GM13976 (cell line): ENCODE measurements at regions of chr14 and their contacts with region 1.

Region 1: GRCh38 chr14:93655078-93655750 is 133.1 kb downstream of the PRIMA1 start:
- DNase-seq: peak; percentile 39
- CTCF ChIP-seq: peak; percentile 27

Region 2: GRCh38 chr14:93249128-93249821 is 405.9 kb before region 1 on chr14:
- in situ Hi-C with region 1: no loop called
- DNase-seq: no peak
- CTCF ChIP-seq: no peak

Region 3: GRCh38 chr14:93464271-93464670 is 190.9 kb before region 1 on chr14:
- in situ Hi-C with region 1: no loop called
- DNase-seq: no peak
- CTCF ChIP-seq: no peak

Region 4: DNA sequence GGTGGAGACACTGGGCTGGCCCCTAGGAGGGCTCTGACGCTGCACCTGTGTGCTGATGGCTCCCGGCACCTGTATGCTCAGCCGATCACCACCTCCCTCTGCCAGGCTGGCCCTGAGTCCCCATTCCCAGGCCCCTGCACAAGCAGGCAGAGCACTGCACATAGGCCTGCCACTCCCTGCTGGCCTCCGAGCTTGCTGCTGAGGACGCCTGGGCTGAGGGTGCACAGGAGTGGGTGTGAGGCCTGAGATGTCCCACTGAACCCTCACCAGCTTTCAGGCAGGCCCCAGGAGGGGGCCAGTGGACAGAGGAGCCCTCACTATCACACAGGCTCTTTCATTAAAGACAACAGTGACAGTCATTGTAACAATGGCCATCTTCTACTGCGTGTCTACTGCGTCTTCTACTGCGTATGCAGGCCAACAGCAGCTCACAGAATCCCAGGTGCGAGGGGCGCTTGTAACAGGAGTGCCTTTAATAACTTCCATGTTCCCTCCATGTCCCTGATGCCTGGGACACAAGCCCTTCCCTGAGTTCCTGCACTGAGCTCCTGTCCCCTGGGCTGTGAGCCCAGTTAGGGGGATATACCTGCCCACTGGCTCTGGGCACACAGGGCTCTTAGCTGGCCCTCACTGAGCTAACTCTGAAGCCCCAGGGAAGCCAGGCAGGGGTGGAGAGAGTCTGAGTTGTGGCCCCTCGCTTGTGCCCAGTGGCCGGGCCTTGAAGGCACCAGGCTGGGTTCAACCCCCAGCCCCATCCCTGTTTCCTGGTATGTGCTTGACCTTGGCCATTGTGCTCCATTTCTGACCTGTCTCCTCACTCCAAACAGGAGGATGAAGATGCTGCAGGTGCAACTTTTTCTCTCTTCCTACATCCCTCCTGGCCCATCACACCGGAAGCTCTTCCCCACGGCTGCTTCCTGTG is 61.8 kb after region 1 on chr14:
- in situ Hi-C with region 1: no loop called
- DNase-seq: peak; percentile 24
- CTCF ChIP-seq: no peak

Region 5: DNA sequence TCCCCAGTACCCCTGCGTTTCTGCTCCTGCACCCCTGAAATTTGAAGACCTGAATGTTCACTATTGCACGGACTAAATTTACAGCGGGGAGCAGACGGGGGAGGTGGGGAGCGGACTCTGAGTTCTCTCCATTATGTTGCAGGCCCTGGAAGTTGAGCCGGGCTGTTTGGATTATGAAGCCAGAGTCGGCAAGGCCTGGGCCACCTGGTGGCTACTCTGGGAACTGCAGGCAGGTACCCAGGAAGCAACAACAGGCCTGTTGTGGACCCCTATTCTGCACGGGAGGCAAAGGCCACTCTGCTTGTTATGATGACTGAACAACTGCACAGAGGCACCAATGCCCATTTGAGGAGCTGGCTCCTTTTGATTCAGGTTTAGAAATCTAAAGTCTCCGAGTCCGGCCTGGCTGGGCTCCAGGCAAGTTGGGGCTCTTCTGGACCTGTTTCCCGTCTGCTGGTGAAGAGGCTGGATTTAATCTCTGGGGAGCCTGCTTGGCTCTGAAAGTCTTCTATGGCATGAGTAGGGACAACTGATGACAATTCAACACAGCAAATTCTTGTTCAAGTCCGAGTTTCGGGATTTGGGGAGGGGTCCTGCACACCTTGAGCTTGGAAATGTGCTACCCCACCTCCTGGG is 237.8 kb after region 1 on chr14:
- in situ Hi-C with region 1: no loop called
- DNase-seq: peak; percentile 82
- CTCF ChIP-seq: peak; percentile 92

Region 6: GRCh38 chr14:93906341-93907329 is 251.4 kb after region 1 on chr14:
- in situ Hi-C with region 1: loop called (anchors 10 kb)
- DNase-seq: peak; percentile 86
- CTCF ChIP-seq: peak; percentile 65

Region 7: GRCh38 chr14:94173885-94174603 is 518.8 kb after region 1 on chr14 and contains the start of gene PPP4R4:
- in situ Hi-C with region 1: loop called (anchors 25 kb)
- DNase-seq: peak; percentile 95
- CTCF ChIP-seq: no peak